ENCODE measurements at regions of chr10 and their contacts with region 1.

Region 1: DNA sequence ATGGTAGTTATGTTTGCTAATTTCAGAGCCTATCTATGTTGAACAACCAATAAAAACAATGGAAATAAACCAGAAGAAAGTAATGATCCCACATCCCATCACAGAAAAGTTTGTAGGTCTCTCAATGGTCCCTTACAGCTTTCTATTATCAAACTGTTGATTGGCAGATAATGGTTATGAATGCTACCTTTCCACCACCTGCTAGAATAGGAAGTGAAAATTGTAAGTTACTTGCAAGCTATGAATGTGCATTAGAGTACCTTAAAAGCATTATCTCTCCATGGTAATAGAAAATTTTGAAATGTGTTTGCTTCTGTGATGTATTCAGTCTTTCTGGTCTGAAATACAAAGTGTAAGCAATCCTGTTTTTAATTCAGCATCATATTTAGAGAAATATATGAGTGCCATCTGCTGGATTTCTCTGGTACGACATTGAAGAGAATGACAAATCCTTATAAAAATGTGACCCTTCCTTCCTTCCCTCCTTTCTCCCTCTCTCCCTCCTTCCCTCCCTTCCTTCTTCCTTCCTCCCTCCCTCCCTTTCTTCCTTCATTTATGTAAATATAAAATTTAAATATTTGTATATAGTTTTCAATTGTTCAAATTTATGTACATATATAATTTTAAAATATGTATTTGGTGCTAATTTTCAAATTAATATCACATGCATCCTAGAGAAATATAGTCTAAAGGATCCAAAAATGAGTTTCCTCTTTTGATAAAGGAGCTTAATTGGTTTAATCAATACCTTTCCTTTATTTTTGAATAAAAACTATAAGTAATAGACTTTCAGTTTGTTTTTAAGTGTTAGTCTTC is 41.4 kb upstream of the PNLIPRP3 start:
- DNase-seq: no peak
- H3K4me3 ChIP-seq: no peak overlapping the region
- H3K27ac ChIP-seq: no peak overlapping the region
- H3K27me3 ChIP-seq: peaks cover 0 to 11% (median 0%) of the 10 kb centered on the region in 45 donors
- CTCF ChIP-seq: peak; percentile 39 to 86 (median 68)

Region 2: GRCh38 chr10:115141254-115141653 is 1244.9 kb before region 1 on chr10:
- intact Hi-C with region 1: loop called in 1 of 2 experiments (anchors 10 kb)
- DNase-seq: no peak
- H3K4me3 ChIP-seq: no peak overlapping the region
- H3K27ac ChIP-seq: no peak overlapping the region
- H3K27me3 ChIP-seq: no peaks in the 10 kb centered on the region
- CTCF ChIP-seq: peak; percentile 27 to 74 (median 46)

Region 3: GRCh38 chr10:115432188-115432775 is 953.9 kb before region 1 on chr10:
- intact Hi-C with region 1: loop called in 1 of 2 experiments (anchors 10 kb)
- DNase-seq: no peak
- H3K4me3 ChIP-seq: no peak overlapping the region
- H3K27ac ChIP-seq: no peak overlapping the region
- H3K27me3 ChIP-seq: no peaks in the 10 kb centered on the region
- CTCF ChIP-seq: peak in 29 of 56 donors; percentile 1 to 52 (median 26)

Region 4: DNA sequence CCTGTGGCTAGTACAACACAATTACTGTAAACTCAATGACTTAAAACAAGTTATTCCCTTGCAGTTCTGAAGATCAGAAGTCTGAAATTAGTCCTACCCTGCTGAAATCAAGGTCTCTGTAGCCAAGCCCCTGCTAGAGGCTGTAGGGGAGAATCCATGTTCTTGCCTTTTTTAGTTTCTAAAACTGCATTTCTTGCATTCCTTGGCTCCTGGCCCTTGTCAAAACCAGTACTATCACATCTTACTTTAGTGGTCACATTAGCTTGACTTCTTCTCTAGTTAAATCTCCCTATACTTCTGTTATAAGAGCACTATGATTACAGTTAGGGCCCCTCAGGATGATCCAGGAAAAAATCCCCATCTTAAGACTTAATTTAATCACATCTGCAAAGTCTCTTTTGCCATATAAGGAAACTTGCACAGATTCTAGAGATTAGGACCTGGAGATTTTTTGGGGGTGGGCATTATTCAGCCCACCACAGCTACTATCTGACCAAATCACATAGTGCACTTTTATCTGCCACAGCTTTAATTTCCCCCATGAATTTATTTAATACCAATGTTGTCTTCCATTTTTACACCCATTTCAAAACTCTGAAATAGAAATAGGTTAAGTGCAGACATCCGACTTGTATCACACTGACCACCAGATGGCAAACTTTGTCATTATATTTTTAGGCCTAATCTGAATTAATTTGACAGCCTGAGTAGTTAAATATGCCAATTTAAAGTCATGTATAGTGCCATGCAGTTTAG is 680.0 kb before region 1 on chr10:
- intact Hi-C with region 1: loop called in 1 of 2 experiments (anchors 10 kb)
- DNase-seq: no peak
- H3K4me3 ChIP-seq: no peak overlapping the region
- H3K27ac ChIP-seq: no peak overlapping the region
- H3K27me3 ChIP-seq: no peaks in the 10 kb centered on the region
- CTCF ChIP-seq: peak in 55 of 56 donors; percentile 32 to 76 (median 61)

Region 5: GRCh38 chr10:116029826-116030225 is 356.4 kb before region 1 on chr10:
- intact Hi-C with region 1: no loop called
- DNase-seq: no peak
- H3K4me3 ChIP-seq: no peak overlapping the region
- H3K27ac ChIP-seq: no peak overlapping the region
- H3K27me3 ChIP-seq: no peaks in the 10 kb centered on the region
- CTCF ChIP-seq: no peak

Region 6: DNA sequence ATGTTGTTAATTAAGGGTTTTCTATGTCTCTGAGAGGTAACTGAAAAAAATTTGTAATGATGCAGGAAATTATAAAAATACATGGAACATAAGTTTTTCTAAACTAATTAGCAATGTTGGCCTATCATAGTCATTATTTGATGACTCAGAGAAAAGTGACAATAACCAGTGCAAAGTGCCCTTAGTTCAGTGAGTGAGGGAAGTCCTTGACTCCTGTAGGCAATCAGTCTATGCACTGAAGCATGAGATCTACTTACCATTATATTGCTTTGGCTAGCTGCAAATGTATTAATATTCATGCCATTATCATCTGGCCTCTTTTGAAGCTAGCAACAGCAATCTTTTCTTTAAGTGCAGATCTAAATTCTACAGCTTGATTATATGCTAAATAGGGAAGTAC is 21.3 kb before region 1 on chr10:
- intact Hi-C with region 1: no loop called
- DNase-seq: no peak
- H3K4me3 ChIP-seq: no peak overlapping the region
- H3K27ac ChIP-seq: no peak overlapping the region
- H3K27me3 ChIP-seq: peaks cover 0 to 5% (median 0%) of the 10 kb centered on the region in 45 donors
- CTCF ChIP-seq: no peak